Spleen (tissue), 13 donors: ENCODE measurements at regions of chr3 and their contacts with region 1.

Region 1: GRCh38 chr3:169668957-169669681 is 5.6 kb upstream of the MECOM start:
- DNase-seq: peak; percentile 88
- H3K4me3 ChIP-seq: peak overlapping the region; percentile 28 to 67 (median 36)
- H3K27ac ChIP-seq: peak overlapping the region in 3 of 8 donors; percentile 40 to 46 (median 41)
- H3K4me1 ChIP-seq: peaks cover 12 to 32% (median 24%) of the 10 kb centered on the region in 6 donors
- H3K27me3 ChIP-seq: peaks cover 0 to 94% (median 69%) of the 10 kb centered on the region in 7 donors
- CTCF ChIP-seq: peak; percentile 17 to 75 (median 60)
- POLR2A ChIP-seq: no peak

Region 2: DNA sequence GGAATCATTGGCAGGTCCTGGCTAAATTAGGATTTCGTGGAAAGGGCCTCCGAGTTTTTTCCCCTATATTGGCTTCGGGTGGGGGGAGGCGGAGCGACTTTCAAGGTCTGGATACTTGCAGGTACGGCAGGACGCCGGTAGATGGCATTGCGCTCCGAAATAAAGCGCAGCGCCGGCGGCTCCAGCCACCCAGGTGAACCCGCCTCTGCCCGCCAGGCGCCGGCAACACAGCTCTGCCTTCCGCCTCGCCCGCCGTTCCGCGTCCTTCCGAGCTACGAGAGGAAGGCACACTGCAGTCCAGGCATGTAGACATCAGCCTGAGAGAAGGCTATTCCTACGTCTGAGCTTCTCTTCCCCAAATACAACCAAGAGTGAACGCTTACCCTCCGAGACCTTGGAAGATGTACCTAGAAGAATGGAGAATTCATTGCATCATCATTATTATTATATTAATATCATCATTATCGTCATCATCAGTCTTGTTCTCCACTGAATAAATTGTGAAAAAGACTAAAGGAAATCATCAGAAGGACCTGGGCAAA is 519.7 kb before region 1 on chr3:
- intact Hi-C with region 1: loop called (anchors 10 kb)
- DNase-seq: peak; percentile 94
- H3K4me3 ChIP-seq: peak overlapping the region in 6 of 8 donors; percentile 3 to 67 (median 10)
- H3K27ac ChIP-seq: peak overlapping the region in 7 of 8 donors; percentile 33 to 85 (median 78)
- H3K4me1 ChIP-seq: peaks cover 0 to 51% (median 32%) of the 10 kb centered on the region in 6 donors
- H3K27me3 ChIP-seq: peaks cover 0 to 67% (median 49%) of the 10 kb centered on the region in 7 donors
- CTCF ChIP-seq: peak; percentile 45 to 84 (median 78)
- POLR2A ChIP-seq: no peak

Region 3: DNA sequence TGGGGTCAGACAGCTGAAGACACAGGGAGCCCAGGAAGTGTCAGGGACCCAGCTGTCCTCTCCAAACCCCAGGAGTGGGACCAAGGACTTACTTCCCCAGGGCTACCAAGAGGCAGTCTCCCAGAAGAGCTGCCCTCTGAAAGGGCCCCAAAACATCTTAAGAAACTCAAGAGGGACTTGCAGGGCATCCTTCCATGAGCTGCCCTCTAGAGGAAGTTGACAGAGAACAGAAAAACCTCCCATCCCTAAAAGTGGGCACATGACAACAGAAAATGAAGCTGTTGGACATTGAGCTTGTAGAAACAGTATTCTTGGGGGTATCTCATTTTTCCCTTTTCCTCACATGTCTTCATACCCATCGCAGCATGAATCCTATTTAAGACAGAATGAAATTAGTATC is 64.6 kb before region 1 on chr3:
- intact Hi-C with region 1: no loop called
- DNase-seq: no peak
- H3K4me3 ChIP-seq: no peak overlapping the region
- H3K27ac ChIP-seq: no peak overlapping the region
- H3K4me1 ChIP-seq: no peaks in the 10 kb centered on the region
- H3K27me3 ChIP-seq: no peaks in the 10 kb centered on the region
- CTCF ChIP-seq: no peak
- POLR2A ChIP-seq: no peak

Region 4: DNA sequence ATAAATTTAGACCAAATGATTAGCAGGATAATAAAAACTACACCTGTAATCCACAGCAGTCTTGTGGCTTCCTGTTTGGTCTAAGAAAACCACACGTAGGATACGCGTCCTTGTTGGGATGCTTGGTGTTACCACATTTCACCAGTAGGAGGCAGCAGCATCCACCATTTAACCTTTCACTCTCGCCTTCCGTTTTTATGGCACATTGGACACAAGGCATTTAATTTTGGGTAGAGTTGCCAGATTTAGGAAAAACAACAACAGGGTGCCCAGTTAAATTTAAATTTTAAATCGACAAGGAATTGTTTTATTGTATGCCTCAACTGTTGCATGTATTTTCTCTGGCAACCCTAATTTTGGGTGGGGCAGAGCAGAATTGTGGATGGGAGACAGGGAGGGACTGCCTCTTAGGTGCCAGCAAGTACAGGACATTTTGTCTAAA is 194.4 kb after region 1 on chr3:
- intact Hi-C with region 1: no loop called
- DNase-seq: no peak
- H3K4me3 ChIP-seq: no peak overlapping the region
- H3K27ac ChIP-seq: no peak overlapping the region
- H3K4me1 ChIP-seq: peaks cover 0 to 34% (median 19%) of the 10 kb centered on the region in 6 donors
- H3K27me3 ChIP-seq: no peaks in the 10 kb centered on the region
- CTCF ChIP-seq: peak; percentile 89 to 96 (median 93)
- POLR2A ChIP-seq: no peak

Region 5: DNA sequence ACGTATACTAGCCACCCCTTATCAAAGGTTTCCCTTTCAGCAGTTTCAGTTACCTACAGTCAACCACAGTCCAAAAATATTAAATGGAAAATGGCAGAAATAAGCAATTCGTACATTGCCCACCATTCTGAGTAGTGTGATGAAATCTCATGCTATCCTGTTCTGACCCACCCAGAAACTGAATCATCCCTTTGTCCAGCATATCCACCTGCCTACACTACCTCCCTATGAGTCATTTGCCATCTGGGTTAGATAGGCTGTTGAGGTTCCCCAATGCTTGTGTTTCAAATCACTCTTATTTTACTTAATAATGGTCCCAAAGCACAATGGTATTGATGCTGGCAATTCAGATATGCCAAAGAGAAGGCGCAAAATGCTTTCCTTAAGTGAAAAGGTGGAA is 527.7 kb after region 1 on chr3:
- intact Hi-C with region 1: no loop called
- DNase-seq: no peak
- H3K4me3 ChIP-seq: no peak overlapping the region
- H3K27ac ChIP-seq: no peak overlapping the region
- H3K4me1 ChIP-seq: no peaks in the 10 kb centered on the region
- H3K27me3 ChIP-seq: no peaks in the 10 kb centered on the region
- CTCF ChIP-seq: no peak
- POLR2A ChIP-seq: no peak